ENCODE measurements at regions of chr9 and their contacts with region 1.

Region 1: DNA sequence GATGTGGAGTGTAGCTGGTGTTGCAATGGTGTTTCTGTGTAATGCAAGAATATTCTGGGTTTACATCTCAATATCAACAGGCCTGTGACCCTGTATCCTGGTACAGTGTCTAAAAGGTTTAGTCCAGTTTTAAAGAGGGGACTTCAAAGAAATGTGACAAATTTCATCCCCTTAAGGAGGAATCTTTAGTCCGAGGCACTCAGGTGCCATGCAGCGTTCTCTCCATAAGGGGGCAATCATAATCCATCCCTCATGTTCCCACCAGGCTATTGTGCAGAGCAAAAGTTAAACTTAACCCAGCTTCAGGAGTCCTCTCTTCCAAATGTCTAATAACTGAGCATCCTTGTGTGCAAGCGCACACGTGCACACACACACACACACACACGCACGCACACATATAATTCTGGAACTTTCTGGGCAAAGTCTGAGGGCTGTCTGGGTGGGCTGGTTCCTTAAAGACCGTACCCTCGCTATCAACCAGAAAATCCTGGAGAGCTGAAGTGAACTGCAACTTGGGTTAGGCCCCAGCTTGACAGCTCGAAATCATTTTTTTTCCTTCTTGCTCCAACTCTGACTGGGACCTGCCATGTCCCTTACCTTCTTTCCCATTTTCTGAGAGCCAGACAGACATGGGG is 46.0 kb downstream of the CRB2 start:
- DNase-seq: peak; percentile 59 to 77 (median 66)
- ATAC-seq: peak; percentile 91
- H3K4me3 ChIP-seq: no peak overlapping the region
- H3K27ac ChIP-seq: no peak overlapping the region
- H3K4me1 ChIP-seq: peaks cover 7 to 9% of the 10 kb centered on the region in 2 experiments
- H3K27me3 ChIP-seq: no peaks in the 10 kb centered on the region
- CTCF ChIP-seq: peak; percentile 77 to 91 (median 90)
- EP300 ChIP-seq: no peak
- POLR2A ChIP-seq: no peak
- RAD21 ChIP-seq: peak; percentile 71 to 88

Region 2: GRCh38 chr9:123537809-123538208 is 135.8 kb after region 1 on chr9:
- CTCF ChIA-PET with region 1: interaction called, 3 read pairs
- POLR2A ChIA-PET with region 1: no interaction called
- in situ Hi-C with region 1: no loop called
- intact Hi-C with region 1: loop called (anchors 2 kb)
- DNase-seq: no peak
- ATAC-seq: no peak
- H3K4me3 ChIP-seq: no peak overlapping the region
- H3K27ac ChIP-seq: no peak overlapping the region
- H3K4me1 ChIP-seq: no peaks in the 10 kb centered on the region
- H3K27me3 ChIP-seq: no peaks in the 10 kb centered on the region
- CTCF ChIP-seq: no peak
- EP300 ChIP-seq: no peak
- POLR2A ChIP-seq: no peak
- RAD21 ChIP-seq: no peak

Region 3: DNA sequence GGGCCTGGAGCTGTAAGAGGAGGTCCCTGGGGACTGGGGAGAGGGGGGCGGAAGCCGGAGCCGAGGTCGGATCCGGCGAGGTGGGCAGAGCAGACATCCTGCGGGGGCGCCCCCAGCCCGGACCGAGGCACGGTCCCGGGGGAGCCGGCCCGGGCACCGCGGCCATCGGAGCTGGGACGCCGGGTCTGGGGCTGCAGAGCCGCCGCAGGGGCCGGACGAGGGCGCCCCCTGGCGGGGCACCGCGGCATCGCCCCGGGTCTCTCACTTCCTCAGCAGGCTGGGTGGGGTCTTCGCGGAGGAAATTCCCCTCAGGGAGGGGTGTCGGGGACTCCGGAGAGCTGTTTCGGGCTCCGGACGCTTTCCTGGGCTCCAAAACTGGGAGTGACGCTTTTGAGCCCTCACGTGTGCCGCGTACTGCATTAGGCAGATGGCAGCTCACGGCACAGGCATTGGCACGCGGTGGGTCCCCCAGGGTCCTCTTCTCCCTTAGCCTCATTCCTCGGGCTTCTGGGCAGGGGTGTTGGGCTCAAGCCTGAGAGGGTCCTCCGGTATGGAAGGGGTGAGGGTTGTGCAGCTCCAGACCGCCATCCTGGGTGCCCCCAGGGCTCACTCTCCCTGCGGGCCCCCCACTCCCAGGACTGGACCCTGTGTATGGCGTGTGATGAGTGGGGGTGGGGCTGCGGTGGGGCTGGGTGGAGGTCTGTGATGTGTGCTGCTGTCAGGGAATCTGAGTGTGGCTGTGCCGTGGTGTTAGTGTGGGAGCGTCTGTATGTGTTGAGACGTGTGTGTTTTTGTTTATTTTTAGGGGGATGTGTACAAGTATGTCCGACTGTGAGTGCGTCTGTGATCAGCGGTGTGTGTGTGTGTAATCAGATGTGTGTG is 639.2 kb after region 1 on chr9:
- CTCF ChIA-PET with region 1: interaction called, 9 read pairs
- POLR2A ChIA-PET with region 1: interaction called, 3 read pairs
- in situ Hi-C with region 1: loop called (anchors 10 kb)
- intact Hi-C with region 1: loop called (anchors 2 kb)
- DNase-seq: peak; percentile 41 to 89 (median 86)
- ATAC-seq: peak; percentile 87
- H3K4me3 ChIP-seq: no peak overlapping the region
- H3K27ac ChIP-seq: no peak overlapping the region
- H3K4me1 ChIP-seq: peaks cover 2 to 20% of the 10 kb centered on the region in 2 experiments; a peak in 4 of 5 replicates
- H3K27me3 ChIP-seq: peaks cover 5 to 65% of the 10 kb centered on the region in 2 experiments; a peak in 3 of 5 replicates
- CTCF ChIP-seq: peak; percentile 81 to 86 (median 85)
- EP300 ChIP-seq: no peak
- POLR2A ChIP-seq: no peak
- RAD21 ChIP-seq: peak; percentile 73 to 86

Region 4: DNA sequence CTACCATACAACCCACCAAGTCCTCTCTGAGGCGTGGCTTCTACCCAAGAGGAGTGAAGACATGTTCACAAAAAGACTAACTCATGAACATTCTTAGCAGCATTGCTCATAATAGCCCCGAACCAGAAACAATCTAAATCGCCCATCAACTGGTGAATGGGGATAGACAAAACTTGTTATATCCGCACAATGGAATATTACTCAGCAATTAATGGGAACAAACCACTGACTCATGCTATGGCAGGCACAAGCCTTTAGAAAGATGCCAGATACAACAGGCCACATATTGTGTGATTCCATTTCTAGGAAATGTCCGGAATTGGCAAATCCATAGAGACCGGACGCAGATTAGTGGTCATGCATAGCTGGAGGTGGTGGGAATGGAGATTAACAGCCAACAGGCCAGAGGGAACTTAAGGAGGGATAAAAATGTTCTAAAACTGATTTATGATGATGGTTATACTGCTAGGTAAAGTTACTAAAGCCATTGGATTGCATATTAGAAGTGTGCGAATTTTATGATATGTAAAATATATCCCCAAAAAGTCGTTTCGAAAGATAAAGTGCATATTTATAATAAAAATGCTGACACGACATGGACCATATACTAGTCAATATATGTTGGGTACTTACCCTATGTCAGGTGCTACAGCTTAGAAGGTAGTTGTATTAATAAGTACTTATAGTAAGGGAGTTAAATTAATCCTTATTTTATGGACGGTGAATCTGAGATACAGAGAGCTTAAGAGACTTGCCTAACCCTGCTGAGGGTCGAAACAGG is 665.0 kb after region 1 on chr9:
- CTCF ChIA-PET with region 1: no interaction called
- POLR2A ChIA-PET with region 1: no interaction called
- in situ Hi-C with region 1: no loop called
- intact Hi-C with region 1: no loop called
- DNase-seq: no peak
- ATAC-seq: no peak
- H3K4me3 ChIP-seq: no peak overlapping the region
- H3K27ac ChIP-seq: no peak overlapping the region
- H3K4me1 ChIP-seq: no peaks in the 10 kb centered on the region
- H3K27me3 ChIP-seq: peaks cover 6 to 27% of the 10 kb centered on the region in 2 experiments; a peak in 3 of 5 replicates
- CTCF ChIP-seq: no peak
- EP300 ChIP-seq: no peak
- POLR2A ChIP-seq: no peak
- RAD21 ChIP-seq: no peak

Measured in K562 (cell line).